HCT116 (cell line): ENCODE measurements at regions of chr9 and their contacts with region 1.

Region 1: GRCh38 chr9:38305582-38305981 is 86.9 kb upstream of the ALDH1B1 start:
- DNase-seq: no peak
- ATAC-seq: no peak
- H3K4me3 ChIP-seq: no peak overlapping the region
- H3K27ac ChIP-seq: no peak overlapping the region
- H3K4me1 ChIP-seq: peaks cover 0 to 2% of the 10 kb centered on the region in 2 experiments; a peak in 1 of 4 replicates
- H3K27me3 ChIP-seq: no peaks in the 10 kb centered on the region
- CTCF ChIP-seq: no peak
- POLR2A ChIP-seq: no peak
- RAD21 ChIP-seq: no peak

Region 2: GRCh38 chr9:37485389-37486219 is 820.0 kb before region 1 on chr9 and contains the start of gene POLR1E:
- CTCF ChIA-PET with region 1: no interaction called
- POLR2A ChIA-PET with region 1: no interaction called
- RAD21 ChIA-PET with region 1: no interaction called
- intact Hi-C with region 1: no loop called
- DNase-seq: peak; percentile 84
- ATAC-seq: peak; percentile 91
- H3K4me3 ChIP-seq: peak within 1 kb of the TSS; percentile 92 to 100
- H3K27ac ChIP-seq: peak within 1 kb of the TSS; percentile 63
- H3K4me1 ChIP-seq: peaks cover 12 to 44% of the 10 kb centered on the region in 2 experiments
- H3K27me3 ChIP-seq: no peaks in the 10 kb centered on the region
- CTCF ChIP-seq: no peak
- POLR2A ChIP-seq: peak; percentile 75
- RAD21 ChIP-seq: no peak
- total RNA-seq, gene POLR1E: 60.9 TPM

Region 3: GRCh38 chr9:38227061-38227540 is 78.5 kb before region 1 on chr9:
- CTCF ChIA-PET with region 1: no interaction called
- POLR2A ChIA-PET with region 1: no interaction called
- RAD21 ChIA-PET with region 1: no interaction called
- intact Hi-C with region 1: no loop called
- DNase-seq: no peak
- ATAC-seq: peak; percentile 85
- H3K4me3 ChIP-seq: no peak overlapping the region
- H3K27ac ChIP-seq: no peak overlapping the region
- H3K4me1 ChIP-seq: peaks cover 3 to 16% of the 10 kb centered on the region in 2 experiments; a peak in 3 of 4 replicates
- H3K27me3 ChIP-seq: no peaks in the 10 kb centered on the region
- CTCF ChIP-seq: no peak
- POLR2A ChIP-seq: no peak
- RAD21 ChIP-seq: no peak

Region 4: DNA sequence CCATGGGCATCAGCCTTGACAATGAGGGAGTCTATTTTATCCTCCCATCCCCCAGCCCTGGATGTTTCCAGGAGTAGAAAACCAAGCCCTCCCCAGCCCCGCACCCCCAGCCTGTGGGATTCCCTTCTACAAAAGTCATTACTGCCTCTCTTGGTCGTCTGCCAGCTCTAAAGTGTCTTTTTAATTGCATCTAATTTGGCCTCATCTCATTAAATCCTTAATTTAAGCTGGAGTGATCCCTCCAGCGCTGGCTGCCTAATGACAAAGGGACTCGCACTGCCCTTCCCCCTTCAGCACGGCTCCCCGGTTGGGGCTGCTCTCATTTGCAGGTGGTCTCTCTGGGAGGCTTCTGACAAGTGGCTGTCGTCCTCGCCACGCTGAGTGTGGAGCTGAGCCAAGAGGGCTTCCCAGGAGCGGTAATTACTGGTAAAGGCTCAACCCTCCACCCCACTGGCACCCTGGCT is 21.0 kb before region 1 on chr9:
- CTCF ChIA-PET with region 1: no interaction called
- POLR2A ChIA-PET with region 1: no interaction called
- RAD21 ChIA-PET with region 1: no interaction called
- intact Hi-C with region 1: loop called (anchors 2 kb)
- DNase-seq: no peak
- ATAC-seq: no peak
- H3K4me3 ChIP-seq: no peak overlapping the region
- H3K27ac ChIP-seq: no peak overlapping the region
- H3K4me1 ChIP-seq: no peaks in the 10 kb centered on the region
- H3K27me3 ChIP-seq: no peaks in the 10 kb centered on the region
- CTCF ChIP-seq: no peak
- POLR2A ChIP-seq: no peak
- RAD21 ChIP-seq: no peak

Region 5: DNA sequence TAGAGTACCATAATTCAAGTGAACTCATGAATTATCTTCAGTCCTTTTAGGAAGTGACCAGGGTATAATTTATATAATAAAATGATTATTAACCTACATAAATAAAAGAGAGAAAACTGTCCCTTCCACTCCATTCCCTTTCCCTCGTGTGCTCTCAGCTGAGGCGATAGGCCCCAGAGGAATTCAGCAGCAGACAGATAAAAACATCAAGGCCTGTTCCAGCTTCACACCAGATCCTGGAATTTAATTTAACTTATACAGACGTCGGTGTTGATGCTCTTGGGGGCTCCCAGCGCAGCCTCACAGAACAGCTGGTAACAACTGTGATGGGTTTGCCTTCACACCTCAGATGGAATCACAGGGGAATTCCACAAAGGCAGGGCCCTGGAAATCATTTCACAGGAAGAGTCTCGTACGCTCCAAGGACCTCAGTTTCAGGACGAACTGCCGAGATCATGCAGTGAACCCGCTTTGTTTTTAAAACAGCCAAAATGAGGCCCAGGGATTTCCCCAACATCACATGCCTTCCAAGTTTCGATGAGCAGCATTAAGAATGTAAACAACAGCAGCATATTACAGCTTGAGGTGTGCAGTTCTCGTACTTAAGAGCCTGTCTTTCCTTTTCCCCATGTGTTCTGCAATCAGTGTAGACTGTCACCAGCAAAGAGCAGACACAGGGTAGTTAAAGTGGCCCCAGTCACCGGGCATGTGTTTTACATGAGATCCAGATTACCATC is 13.3 kb after region 1 on chr9:
- CTCF ChIA-PET with region 1: no interaction called
- POLR2A ChIA-PET with region 1: no interaction called
- RAD21 ChIA-PET with region 1: no interaction called
- intact Hi-C with region 1: loop called (anchors 2 kb)
- DNase-seq: no peak
- ATAC-seq: no peak
- H3K4me3 ChIP-seq: no peak overlapping the region
- H3K27ac ChIP-seq: no peak overlapping the region
- H3K4me1 ChIP-seq: no peaks in the 10 kb centered on the region
- H3K27me3 ChIP-seq: 0 out of 2 replicates have a peak, but pooled peaks cover 4% of the 10 kb centered on the region
- CTCF ChIP-seq: no peak
- POLR2A ChIP-seq: no peak
- RAD21 ChIP-seq: no peak